OCI-LY7 (cell line): ENCODE measurements at regions of chrX and their contacts with region 1.

Region 1: GRCh38 chrX:30652527-30653414 is 452 bp upstream of the GK start:
- DNase-seq: peak; percentile 91
- H3K4me3 ChIP-seq: peak overlapping the region; percentile 87
- H3K27ac ChIP-seq: peak overlapping the region; percentile 48
- H3K4me1 ChIP-seq: peaks cover 26% of the 10 kb centered on the region
- CTCF ChIP-seq: no peak

Region 2: DNA sequence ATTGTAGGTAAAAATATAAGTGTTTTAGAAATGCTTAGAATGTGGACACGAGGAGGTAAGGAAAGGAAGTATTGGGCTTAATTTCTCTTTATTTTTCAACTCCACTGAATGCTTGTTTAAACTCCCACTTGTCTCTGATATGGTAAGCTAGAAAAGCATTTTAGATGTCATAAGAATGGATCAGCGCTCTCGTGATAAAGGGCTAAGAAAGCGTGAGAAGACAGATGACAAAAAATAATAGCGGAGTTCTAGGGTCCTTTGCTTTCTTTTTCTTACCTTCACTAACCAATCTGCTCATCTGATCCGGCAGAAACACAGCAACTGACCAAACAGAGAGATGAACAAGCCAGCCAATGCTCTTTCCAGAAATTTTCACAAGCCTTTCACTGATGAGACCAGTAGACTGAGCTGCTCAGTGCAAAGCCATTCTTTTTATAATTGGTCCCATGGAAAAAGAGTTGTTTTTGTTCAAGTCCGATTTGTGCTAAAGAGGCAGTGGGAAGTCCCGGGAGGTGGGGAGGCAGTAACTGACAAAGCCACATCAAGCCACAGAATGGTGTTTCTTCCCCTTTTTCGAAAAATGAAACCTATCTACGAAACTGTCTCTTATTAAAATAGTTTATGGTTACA is 75.3 kb before region 1 on chrX and contains the start of gene TASL:
- CTCF ChIA-PET with region 1: no interaction called
- POLR2A ChIA-PET with region 1: no interaction called
- intact Hi-C with region 1: loop called (anchors 5 kb)
- DNase-seq: peak; percentile 57
- H3K4me3 ChIP-seq: peak within 1 kb of the TSS; percentile 60
- H3K27ac ChIP-seq: peak within 1 kb of the TSS; percentile 11
- H3K4me1 ChIP-seq: peaks cover 15% of the 10 kb centered on the region
- CTCF ChIP-seq: no peak
- total RNA-seq, gene TASL: 0.13 TPM in 1 of 2 replicates, not detected in the other

Region 3: DNA sequence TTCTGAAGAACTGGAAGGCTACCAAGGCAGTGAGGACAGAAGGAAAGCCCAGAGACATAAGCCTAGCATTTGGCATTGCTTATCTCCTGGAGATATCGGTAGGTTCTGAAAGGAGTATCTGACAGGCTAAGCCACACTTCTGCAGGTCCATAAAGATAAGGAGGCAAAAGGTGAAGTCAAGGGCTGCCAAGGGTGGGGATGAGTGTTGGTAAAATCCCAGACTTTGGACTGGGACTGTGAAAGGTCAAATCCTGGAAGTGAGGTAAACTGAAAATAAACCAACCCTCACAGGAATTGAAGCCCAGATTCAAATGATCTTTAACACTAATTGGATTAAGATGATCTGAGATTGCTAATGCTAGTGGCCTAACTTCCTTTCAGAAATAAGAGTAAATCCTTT is 27.8 kb after region 1 on chrX:
- CTCF ChIA-PET with region 1: no interaction called
- POLR2A ChIA-PET with region 1: no interaction called
- intact Hi-C with region 1: no loop called
- DNase-seq: no peak
- H3K4me3 ChIP-seq: no peak overlapping the region
- H3K27ac ChIP-seq: no peak overlapping the region
- H3K4me1 ChIP-seq: no peaks in the 10 kb centered on the region
- CTCF ChIP-seq: no peak

Region 4: DNA sequence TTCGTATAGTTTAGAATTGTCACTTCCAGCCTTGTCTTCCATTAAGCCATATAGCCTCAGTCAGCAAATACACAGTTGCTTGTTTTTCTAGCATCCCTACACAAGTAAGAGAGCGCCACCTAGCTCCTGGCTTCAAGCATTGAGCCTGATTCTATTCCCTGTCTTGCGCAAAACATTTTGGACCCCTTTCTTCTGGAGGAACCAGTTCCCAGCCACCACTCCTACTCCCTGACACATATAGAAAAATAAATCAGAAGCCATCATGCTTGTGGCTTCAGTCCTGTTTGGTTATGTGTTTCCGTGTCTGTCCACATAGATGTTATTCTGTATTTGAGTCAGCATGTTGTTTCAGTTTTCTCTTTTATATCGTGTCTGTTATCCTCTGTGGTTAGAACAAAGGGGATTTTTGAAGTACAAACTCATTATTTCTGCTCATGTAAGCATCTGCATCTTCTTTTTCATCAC is 60.3 kb after region 1 on chrX:
- CTCF ChIA-PET with region 1: no interaction called
- POLR2A ChIA-PET with region 1: no interaction called
- intact Hi-C with region 1: no loop called
- DNase-seq: peak; percentile 46
- H3K4me3 ChIP-seq: no peak overlapping the region
- H3K27ac ChIP-seq: no peak overlapping the region
- H3K4me1 ChIP-seq: no peaks in the 10 kb centered on the region
- CTCF ChIP-seq: peak; percentile 77

Region 5: DNA sequence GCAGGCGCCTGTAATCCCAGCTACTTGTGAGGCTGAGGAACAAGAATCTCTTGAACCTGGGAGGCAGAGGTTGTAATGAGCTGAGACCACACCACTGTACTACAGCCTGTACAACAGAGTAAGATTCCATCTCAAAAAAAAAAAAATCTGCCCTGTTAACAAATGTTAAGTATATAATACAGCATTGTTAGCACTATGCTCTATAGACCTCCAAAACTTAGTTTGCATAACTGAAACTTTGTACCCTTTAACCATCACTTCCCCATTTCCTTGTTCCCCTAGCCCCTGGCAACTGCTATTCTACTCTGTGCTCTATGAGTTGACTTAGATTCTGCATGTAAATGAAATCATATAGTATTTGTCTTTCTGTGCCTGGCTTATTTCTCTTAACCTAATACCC is 159.6 kb after region 1 on chrX:
- CTCF ChIA-PET with region 1: no interaction called
- POLR2A ChIA-PET with region 1: no interaction called
- intact Hi-C with region 1: loop called (anchors 10 kb)
- DNase-seq: peak; percentile 63
- H3K4me3 ChIP-seq: peak overlapping the region; percentile 46
- H3K27ac ChIP-seq: peak overlapping the region; percentile 77
- H3K4me1 ChIP-seq: peaks cover 36% of the 10 kb centered on the region
- CTCF ChIP-seq: no peak

Region 6: GRCh38 chrX:30889147-30890140 is 236.7 kb after region 1 on chrX and contains the start of gene TAB3:
- CTCF ChIA-PET with region 1: no interaction called
- POLR2A ChIA-PET with region 1: interaction called, 4 read pairs
- intact Hi-C with region 1: loop called (anchors 5 kb)
- DNase-seq: peak; percentile 96
- H3K4me3 ChIP-seq: peak within 1 kb of the TSS; percentile 95
- H3K27ac ChIP-seq: peak within 1 kb of the TSS; percentile 61
- H3K4me1 ChIP-seq: peaks cover 11% of the 10 kb centered on the region
- CTCF ChIP-seq: no peak
- total RNA-seq, gene TAB3: 10.3 and 13.8 TPM in 2 replicates